H1 (cell line): ENCODE measurements at regions of chr2 and their contacts with region 1.

Region 1: DNA sequence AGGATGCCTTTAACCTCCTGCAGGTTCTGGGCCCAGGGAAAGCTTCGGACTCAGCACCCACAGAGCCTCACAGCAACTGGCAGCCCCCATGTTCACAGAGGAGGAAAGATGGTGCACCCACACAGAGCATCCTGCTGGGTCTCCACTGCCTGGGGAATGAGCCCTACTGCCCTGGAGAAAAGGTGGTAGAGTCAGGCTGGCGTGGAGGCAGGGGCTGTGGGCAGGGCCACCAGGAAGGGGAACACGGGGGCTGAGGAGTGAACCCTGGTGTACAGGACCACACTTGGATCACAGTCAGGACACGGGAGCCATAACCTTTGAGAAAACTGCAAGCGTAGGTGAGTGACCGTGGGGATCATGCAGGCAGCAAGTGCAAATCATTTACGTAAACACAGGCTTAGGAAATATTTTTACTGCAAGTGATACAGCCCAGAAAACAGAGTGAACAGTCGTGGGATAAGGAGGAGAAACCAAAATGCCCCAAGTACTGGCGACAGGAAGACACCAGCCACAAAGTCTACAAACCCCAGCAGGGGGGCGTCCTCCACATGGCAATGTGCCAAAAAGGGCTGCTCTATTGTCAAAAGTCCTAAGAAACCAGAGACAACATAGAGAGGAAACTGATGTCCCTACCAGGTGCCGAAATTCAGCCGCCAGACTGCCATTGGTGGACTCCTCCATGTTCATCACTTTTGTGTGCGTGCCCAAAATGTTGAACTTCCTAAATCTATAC is 27.6 kb downstream of the STAT1 start:
- DNase-seq: no peak
- H3K4me3 ChIP-seq: no peak overlapping the region
- H3K27ac ChIP-seq: no peak overlapping the region
- H3K4me1 ChIP-seq: no peaks in the 10 kb centered on the region
- H3K27me3 ChIP-seq: no peaks in the 10 kb centered on the region
- CTCF ChIP-seq: no peak
- EP300 ChIP-seq: no peak
- POLR2A ChIP-seq: no peak
- RAD21 ChIP-seq: no peak

Region 2: GRCh38 chr2:190953257-190953656 is 33.1 kb before region 1 on chr2:
- CTCF ChIA-PET with region 1: no interaction called
- POLR2A ChIA-PET with region 1: no interaction called
- DNase-seq: no peak
- H3K4me3 ChIP-seq: no peak overlapping the region
- H3K27ac ChIP-seq: no peak overlapping the region
- H3K4me1 ChIP-seq: peaks cover 0 to 3% (median 0%) of the 10 kb centered on the region in 4 experiments; a peak in 1 of 7 replicates
- H3K27me3 ChIP-seq: no peaks in the 10 kb centered on the region
- CTCF ChIP-seq: no peak
- EP300 ChIP-seq: no peak
- POLR2A ChIP-seq: no peak
- RAD21 ChIP-seq: no peak

Region 3: DNA sequence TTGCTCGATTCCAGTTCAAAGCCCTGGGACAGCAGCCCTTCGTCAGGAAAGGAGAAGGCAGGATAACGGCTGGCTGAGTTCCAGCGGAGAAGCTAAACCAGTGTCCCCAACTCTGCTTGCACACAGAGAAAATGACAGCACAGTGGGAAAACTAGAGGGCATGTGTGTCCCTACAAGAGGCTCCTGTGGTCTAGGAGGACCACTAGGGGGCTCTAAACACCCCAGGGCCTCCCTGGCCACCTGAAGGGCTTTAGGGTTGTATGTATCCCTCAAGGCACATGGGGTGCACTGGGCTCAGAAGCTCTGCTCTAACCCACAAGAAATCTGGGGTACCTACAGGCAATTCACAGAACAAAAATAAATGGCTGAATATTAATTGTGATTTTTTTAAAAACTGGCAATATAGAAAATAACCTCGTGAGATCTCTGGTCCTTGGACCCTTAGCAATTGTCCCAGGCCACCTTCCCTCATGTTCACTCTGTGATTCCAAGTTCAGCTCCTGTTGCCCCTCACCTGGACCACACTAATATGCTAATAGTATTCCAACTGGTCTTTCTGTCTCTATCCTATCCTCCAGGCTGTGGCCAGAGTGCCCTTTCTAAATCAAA is 10.1 kb after region 1 on chr2:
- CTCF ChIA-PET with region 1: interaction called, 16 read pairs
- POLR2A ChIA-PET with region 1: no interaction called
- DNase-seq: peak in 1 of 2 experiments; percentile 50
- H3K4me3 ChIP-seq: no peak overlapping the region
- H3K27ac ChIP-seq: no peak overlapping the region
- H3K4me1 ChIP-seq: no peaks in the 10 kb centered on the region
- H3K27me3 ChIP-seq: no peaks in the 10 kb centered on the region
- CTCF ChIP-seq: peak; percentile 65 to 94 (median 80)
- EP300 ChIP-seq: no peak
- POLR2A ChIP-seq: no peak
- RAD21 ChIP-seq: peak; percentile 52 to 56

Region 4: GRCh38 chr2:191086706-191087105 is 100.3 kb after region 1 on chr2:
- CTCF ChIA-PET with region 1: no interaction called
- POLR2A ChIA-PET with region 1: no interaction called
- DNase-seq: no peak
- H3K4me3 ChIP-seq: no peak overlapping the region
- H3K27ac ChIP-seq: no peak overlapping the region
- H3K4me1 ChIP-seq: no peaks in the 10 kb centered on the region; a peak in 1 of 7 replicates
- H3K27me3 ChIP-seq: no peaks in the 10 kb centered on the region
- CTCF ChIP-seq: no peak
- EP300 ChIP-seq: no peak
- POLR2A ChIP-seq: no peak
- RAD21 ChIP-seq: no peak